CD4-positive, alpha-beta memory T cell (primary cell): ENCODE measurements at regions of chr10 and their contacts with region 1.

Region 1: GRCh38 chr10:102450194-102450938 is 977 bp downstream of the C10orf95 start:
- DNase-seq: peak; percentile 93 to 96 (median 93)
- H3K4me3 ChIP-seq: peak overlapping the region; percentile 96
- H3K4me3 Mint-ChIP-seq: peak overlapping the region; percentile 90 to 96 (median 94)
- H3K27ac ChIP-seq: peak overlapping the region; percentile 79
- H3K27ac Mint-ChIP-seq: peak overlapping the region; percentile 81 to 97 (median 96)
- H3K4me1 ChIP-seq: peaks cover 23% of the 10 kb centered on the region
- H3K4me1 Mint-ChIP-seq: peaks cover 10 to 31% (median 23%) of the 10 kb centered on the region in 4 donors
- H3K27me3 ChIP-seq: no peaks in the 10 kb centered on the region
- H3K27me3 Mint-ChIP-seq: no peaks in the 10 kb centered on the region

Region 2: DNA sequence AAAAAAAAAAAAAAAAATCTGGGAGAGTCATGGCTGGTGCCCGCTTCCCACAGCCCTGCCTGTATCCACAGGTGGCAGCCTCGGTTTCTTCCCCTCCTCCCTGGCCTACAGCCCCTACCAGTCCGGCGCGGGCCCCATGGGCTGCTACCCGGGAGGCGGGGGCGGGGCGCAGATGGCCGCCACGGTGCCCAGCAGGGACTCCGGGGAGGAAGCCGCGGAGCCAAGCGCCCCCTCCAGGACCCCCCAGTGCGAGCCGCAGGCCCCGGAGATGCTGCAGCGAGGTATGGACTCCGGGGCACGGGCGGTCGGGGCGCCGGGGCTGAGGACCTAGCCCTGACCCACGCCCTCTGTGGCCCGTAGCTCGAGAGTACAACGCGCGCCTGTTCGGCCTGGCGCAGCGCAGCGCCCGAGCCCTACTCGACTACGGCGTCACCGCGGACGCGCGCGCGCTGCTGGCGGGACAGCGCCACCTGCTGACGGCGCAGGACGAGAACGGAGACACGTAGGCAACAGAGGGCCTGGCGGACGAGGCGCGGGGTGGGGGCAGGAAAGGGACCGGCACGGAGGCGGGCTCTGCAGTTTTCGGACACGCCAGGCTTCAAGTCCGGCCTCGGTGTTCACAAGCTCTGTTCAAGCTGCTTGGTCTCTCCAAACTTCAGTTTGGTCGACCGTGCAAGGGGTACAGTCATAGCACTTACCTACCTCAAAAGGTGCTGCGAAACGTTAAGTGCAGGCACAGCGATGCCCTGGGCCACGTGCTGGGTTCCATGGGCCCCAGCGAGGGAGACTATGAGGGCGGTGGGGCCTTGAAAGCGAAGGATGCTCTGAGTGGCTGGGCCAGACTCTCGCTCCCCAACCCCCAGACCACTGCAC is 50.9 kb before region 1 on chr10:
- CTCF ChIA-PET with region 1: interaction called, 20 read pairs
- POLR2A ChIA-PET with region 1: interaction called, 80 read pairs
- intact Hi-C with region 1: loop called (anchors 1 kb)
- DNase-seq: peak; percentile 86 to 90 (median 87)
- H3K4me3 ChIP-seq: peak overlapping the region in 1 of 2 donors; percentile 49
- H3K4me3 Mint-ChIP-seq: peak overlapping the region; percentile 53 to 81 (median 74)
- H3K27ac ChIP-seq: peak overlapping the region; percentile 100
- H3K27ac Mint-ChIP-seq: peak overlapping the region; percentile 89 to 100 (median 100)
- H3K4me1 ChIP-seq: peaks cover 44% of the 10 kb centered on the region
- H3K4me1 Mint-ChIP-seq: peaks cover 19 to 68% (median 32%) of the 10 kb centered on the region in 4 donors
- H3K27me3 ChIP-seq: no peaks in the 10 kb centered on the region
- H3K27me3 Mint-ChIP-seq: no peaks in the 10 kb centered on the region

Region 3: DNA sequence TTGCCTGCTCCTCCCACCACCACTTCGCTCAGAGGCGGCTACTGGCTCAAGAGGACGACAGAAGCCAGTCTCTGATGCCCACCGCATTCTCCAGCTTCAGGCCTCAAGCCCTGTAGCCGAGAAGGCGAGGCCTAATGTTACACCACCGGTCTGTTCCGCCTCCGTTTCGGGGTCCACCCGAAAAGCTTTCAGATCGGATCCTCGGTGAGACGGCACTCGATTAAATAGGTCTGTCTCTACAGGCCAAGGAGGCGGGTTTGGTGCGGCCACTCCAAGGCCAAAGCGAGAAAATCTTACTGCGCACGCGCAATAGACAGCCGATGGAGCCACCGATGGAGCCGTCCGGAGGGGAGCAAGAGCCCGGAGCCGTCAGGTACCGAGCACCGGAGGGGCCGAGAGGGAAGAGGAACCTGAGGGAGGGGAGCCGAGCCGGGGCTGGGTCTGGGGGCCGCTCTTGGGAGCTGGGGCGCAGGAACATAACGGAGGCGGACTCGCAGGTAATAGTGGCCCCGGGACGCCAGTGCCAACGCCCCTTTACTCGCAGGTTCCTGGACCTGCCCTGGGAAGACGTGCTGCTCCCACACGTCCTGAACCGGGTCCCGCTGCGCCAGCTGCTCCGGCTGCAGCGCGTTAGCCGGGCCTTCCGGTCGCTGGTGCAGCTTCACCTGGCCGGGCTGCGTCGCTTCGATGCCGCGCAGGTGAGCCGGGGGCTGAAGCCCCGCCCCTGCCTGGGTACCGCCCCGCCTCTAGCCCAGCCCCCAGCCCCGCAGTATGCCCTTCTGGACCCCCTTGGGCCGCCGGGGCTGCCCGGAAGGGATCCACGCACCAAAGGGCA is 29.3 kb before region 1 on chr10 and contains the start of gene FBXL15:
- CTCF ChIA-PET with region 1: interaction called, 23 read pairs
- POLR2A ChIA-PET with region 1: interaction called, 128 read pairs
- intact Hi-C with region 1: loop called (anchors 1 kb)
- DNase-seq: peak; percentile 92 to 94 (median 93)
- H3K4me3 ChIP-seq: peak within 1 kb of the TSS; percentile 61 to 90
- H3K4me3 Mint-ChIP-seq: peak within 1 kb of the TSS; percentile 90 to 99 (median 96)
- H3K27ac ChIP-seq: peak within 1 kb of the TSS; percentile 64
- H3K27ac Mint-ChIP-seq: peak within 1 kb of the TSS; percentile 92 to 98 (median 96)
- H3K4me1 ChIP-seq: peaks cover 37% of the 10 kb centered on the region
- H3K4me1 Mint-ChIP-seq: peaks cover 17 to 53% (median 33%) of the 10 kb centered on the region in 4 donors
- H3K27me3 ChIP-seq: peaks cover 9% of the 10 kb centered on the region
- H3K27me3 Mint-ChIP-seq: peaks cover 10 to 16% of the 10 kb centered on the region in 2 donors
- total RNA-seq, gene FBXL15: 21.1 to 24.1 TPM

Region 4: DNA sequence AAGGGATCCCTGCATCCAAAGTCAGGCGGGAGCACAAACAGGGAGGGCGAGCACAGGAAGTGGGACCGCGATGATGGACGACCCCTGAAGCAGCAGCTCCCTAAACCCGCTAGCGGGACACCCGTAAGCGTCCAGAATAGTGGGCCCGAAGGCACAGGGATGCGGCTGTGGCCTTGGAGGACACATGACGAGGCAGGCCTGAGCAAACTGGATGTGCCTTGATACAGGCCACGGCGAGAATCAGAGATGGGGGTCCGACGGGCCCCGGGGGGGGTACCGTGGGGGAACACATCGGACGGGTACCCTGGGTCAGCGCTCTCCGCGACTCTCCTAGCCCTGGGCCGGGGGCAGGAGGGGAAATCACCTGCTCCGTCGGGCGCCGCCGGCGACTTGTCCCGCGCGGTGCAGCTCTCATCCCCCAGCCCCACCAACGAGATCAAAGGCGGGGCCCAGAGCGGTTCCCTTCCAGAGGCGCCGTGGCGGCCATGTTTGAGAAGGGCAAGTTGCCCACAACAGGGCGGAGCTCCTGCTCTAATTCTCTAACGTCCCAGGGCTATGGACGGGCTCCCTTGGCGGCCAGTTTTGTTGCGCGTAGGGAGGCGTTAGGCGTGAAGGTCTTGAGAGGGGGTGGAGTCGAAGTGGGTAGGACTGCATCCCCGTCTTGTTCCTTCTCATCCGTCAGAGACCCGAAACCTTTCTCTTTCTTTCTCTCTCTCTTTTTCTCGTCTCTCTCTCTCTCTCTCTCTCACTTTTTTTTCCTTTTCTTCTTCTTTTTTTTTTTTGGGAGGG is 18.0 kb before region 1 on chr10 and contains the start of gene CUEDC2:
- CTCF ChIA-PET with region 1: interaction called, 19 read pairs
- POLR2A ChIA-PET with region 1: interaction called, 186 read pairs
- intact Hi-C with region 1: loop called (anchors 1 kb)
- DNase-seq: peak; percentile 89 to 95 (median 93)
- H3K4me3 ChIP-seq: peak within 1 kb of the TSS; percentile 83 to 92
- H3K4me3 Mint-ChIP-seq: peak within 1 kb of the TSS; percentile 90 to 95 (median 94)
- H3K27ac ChIP-seq: peak within 1 kb of the TSS; percentile 79
- H3K27ac Mint-ChIP-seq: peak within 1 kb of the TSS; percentile 84 to 98 (median 97)
- H3K4me1 ChIP-seq: peaks cover 52% of the 10 kb centered on the region
- H3K4me1 Mint-ChIP-seq: peaks cover 24 to 57% (median 40%) of the 10 kb centered on the region in 4 donors
- H3K27me3 ChIP-seq: no peaks in the 10 kb centered on the region
- H3K27me3 Mint-ChIP-seq: no peaks in the 10 kb centered on the region
- total RNA-seq, gene CUEDC2: 27.2 to 30.8 TPM

Region 5: GRCh38 chr10:102476466-102477141 is 26.2 kb after region 1 on chr10:
- CTCF ChIA-PET with region 1: interaction called, 4 read pairs
- POLR2A ChIA-PET with region 1: interaction called, 24 read pairs
- intact Hi-C with region 1: loop called (anchors 1 kb)
- DNase-seq: no peak
- H3K4me3 ChIP-seq: no peak overlapping the region
- H3K4me3 Mint-ChIP-seq: no peak overlapping the region
- H3K27ac ChIP-seq: no peak overlapping the region
- H3K27ac Mint-ChIP-seq: peak overlapping the region in 6 of 7 donors; percentile 18 to 86 (median 59)
- H3K4me1 ChIP-seq: peaks cover 20% of the 10 kb centered on the region
- H3K4me1 Mint-ChIP-seq: peaks cover 11 to 28% (median 17%) of the 10 kb centered on the region in 4 donors
- H3K27me3 ChIP-seq: no peaks in the 10 kb centered on the region
- H3K27me3 Mint-ChIP-seq: no peaks in the 10 kb centered on the region

Region 6: DNA sequence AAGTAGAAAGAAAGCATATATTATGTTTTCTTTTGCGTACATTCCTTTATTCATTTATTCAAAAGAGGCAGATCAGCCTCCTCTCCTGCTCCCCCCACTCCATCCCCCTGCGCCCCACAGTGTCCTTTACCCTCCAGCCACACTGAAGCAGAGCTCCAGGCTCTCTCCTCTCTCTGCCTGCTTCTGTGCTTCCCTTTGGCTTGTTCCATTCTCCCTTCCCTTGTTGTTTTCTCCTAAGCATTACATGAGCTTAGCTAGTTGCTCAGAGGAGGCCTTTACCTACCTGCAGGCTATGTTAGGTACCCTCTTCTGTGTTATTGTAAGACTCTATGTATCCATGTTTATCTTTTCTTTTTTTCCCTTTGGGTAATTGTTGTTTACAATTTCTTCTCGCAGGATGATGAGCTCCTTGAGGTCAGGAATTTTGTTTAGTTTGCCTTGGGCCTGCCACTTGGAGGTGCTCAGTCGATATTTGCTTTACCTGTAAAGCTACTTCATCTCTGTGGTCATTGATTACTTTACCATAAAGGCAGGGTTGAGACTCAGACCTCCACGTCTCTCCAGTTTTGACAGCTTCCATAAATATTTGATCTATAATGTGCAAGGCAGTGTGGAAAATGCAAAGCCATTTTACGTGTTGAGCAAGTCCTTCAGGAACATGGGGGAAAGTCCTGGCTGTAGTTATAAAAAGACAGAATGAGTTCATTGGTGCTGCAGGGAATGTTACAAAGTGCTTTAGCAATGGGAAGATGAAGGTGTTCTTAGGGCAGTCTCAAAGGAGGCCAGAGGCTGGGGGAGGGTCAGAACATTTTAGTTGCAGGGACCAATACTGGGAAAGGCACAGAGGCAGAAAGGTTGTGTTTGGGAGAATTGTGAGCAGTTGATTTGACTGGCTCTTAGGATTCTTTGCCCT is 495.3 kb after region 1 on chr10:
- CTCF ChIA-PET with region 1: no interaction called
- POLR2A ChIA-PET with region 1: no interaction called
- intact Hi-C with region 1: no loop called
- DNase-seq: no peak
- H3K4me3 ChIP-seq: no peak overlapping the region
- H3K4me3 Mint-ChIP-seq: no peak overlapping the region
- H3K27ac ChIP-seq: no peak overlapping the region
- H3K27ac Mint-ChIP-seq: peak overlapping the region in 1 of 7 donors; percentile 45
- H3K4me1 ChIP-seq: no peaks in the 10 kb centered on the region
- H3K4me1 Mint-ChIP-seq: peaks cover 0 to 7% (median 2%) of the 10 kb centered on the region in 4 donors
- H3K27me3 ChIP-seq: no peaks in the 10 kb centered on the region
- H3K27me3 Mint-ChIP-seq: no peaks in the 10 kb centered on the region